ENCODE measurements at regions of chr17 and their contacts with region 1.

Region 1: GRCh38 chr17:17859909-17860765 is 23.4 kb upstream of the SREBF1 start:
- DNase-seq: peak; percentile 73
- ATAC-seq: peak; percentile 94
- H3K4me3 Mint-ChIP-seq: no peak overlapping the region
- H3K27ac Mint-ChIP-seq: no peak overlapping the region
- H3K4me1 Mint-ChIP-seq: peaks cover 30% of the 10 kb centered on the region
- H3K27me3 Mint-ChIP-seq: peaks cover 2% of the 10 kb centered on the region

Region 2: DNA sequence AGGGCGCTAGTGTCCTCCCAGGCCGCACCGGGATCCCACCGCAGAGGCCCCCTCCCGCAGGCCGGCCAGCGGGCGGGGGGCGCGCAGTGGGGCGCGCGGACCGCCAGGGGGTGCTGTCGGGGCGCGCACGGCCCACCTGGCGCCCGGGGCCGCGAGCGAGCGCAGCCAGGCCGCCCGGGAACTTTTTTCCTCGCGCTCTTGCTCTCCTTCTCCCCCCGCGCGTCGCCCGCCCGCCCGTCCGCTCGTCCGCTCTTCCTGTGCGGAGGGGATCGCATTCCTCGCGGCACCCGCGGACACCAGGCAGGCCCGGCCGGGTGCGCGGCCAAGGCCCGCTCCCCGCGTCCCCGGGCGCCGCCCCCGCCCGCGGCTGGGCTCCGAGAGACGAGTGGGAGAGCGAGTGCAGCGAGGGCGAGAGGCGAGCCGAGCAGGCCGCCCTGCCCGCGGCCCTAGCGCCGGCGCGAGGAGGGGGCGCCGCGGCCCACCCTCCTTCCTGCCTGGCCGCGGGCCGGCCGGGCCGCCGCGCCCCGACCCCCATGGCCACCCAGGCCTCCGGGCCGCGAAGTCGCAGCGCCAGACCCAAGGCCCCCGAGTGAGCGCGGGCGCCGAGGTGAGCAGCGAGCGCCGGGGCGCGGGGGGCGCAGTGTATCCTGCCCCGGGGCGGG is 178.8 kb before region 1 on chr17 and contains the start of gene RAI1:
- CTCF ChIA-PET with region 1: interaction called, 17 read pairs
- DNase-seq: peak; percentile 75
- ATAC-seq: peak; percentile 72
- H3K4me3 Mint-ChIP-seq: peak within 1 kb of the TSS; percentile 85
- H3K27ac Mint-ChIP-seq: peak within 1 kb of the TSS; percentile 83
- H3K4me1 Mint-ChIP-seq: peaks cover 37% of the 10 kb centered on the region
- H3K27me3 Mint-ChIP-seq: peaks cover 13% of the 10 kb centered on the region
- total RNA-seq, gene RAI1: 17.4 to 24.4 TPM

Region 3: GRCh38 chr17:17823433-17824118 is 36.6 kb before region 1 on chr17:
- CTCF ChIA-PET with region 1: interaction called, 19 read pairs
- DNase-seq: peak; percentile 91
- ATAC-seq: peak; percentile 92
- H3K4me3 Mint-ChIP-seq: peak overlapping the region; percentile 76
- H3K27ac Mint-ChIP-seq: peak overlapping the region; percentile 92
- H3K4me1 Mint-ChIP-seq: peaks cover 89% of the 10 kb centered on the region
- H3K27me3 Mint-ChIP-seq: no peaks in the 10 kb centered on the region

Region 4: DNA sequence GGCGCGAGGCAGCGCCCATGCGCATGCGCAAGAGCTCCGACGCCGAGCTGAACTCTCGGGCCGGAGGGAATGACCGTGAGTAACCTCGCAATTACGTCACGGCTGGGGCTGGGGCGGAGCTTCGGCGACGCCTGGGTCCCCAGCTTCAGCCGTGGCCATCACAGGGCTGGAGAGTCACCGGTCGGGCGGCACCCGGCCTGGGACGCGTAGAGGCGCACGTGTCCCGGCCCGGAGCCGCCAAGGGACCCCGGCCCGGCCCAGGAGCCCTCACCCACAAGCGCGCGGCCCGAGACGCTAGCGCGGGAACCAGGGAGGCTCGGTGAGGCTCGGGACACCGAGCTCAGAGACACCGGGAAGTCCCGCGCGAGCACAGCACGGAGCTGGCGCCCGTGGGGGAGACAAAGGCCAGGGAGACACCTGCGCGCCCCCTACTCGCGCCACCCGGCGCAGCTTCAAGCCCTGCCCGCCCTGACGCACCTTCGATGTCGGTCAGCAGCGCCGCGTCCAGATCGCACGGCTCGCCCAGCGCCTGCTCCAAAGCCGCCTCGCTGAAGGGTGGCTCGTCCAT is 23.8 kb before region 1 on chr17:
- CTCF ChIA-PET with region 1: interaction called, 19 read pairs
- DNase-seq: peak; percentile 98
- ATAC-seq: peak; percentile 77
- H3K4me3 Mint-ChIP-seq: peak overlapping the region; percentile 85
- H3K27ac Mint-ChIP-seq: peak overlapping the region; percentile 95
- H3K4me1 Mint-ChIP-seq: peaks cover 71% of the 10 kb centered on the region
- H3K27me3 Mint-ChIP-seq: no peaks in the 10 kb centered on the region

Region 5: DNA sequence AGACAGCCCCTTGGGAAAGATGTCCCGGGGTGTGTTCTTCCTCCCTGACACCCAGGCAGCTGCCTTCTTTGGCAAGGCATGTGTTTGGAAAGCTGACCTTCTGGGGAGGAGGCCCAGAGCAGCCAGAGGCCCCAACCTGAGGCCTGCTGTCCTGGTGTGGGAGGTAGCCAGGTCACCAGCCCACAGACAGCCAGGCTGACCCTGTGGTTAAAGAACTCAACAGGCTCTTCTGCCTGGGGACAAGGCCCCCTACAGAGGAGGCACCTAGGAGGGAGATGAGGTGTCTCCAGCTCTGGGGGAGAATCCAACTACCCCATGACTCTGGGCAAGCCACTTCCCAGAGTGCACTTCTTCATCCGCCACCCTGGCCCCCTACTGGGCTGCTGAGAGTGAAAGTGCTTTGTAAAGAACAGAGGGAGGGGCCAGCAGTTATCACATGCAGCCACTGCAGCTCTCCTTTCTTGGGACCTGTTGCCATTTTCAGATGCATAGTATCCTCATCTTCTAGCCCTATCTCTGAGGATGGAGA is 10.2 kb before region 1 on chr17:
- CTCF ChIA-PET with region 1: interaction called, 14 read pairs
- DNase-seq: peak; percentile 92
- ATAC-seq: peak; percentile 55
- H3K4me3 Mint-ChIP-seq: no peak overlapping the region
- H3K27ac Mint-ChIP-seq: peak overlapping the region; percentile 94
- H3K4me1 Mint-ChIP-seq: peaks cover 75% of the 10 kb centered on the region
- H3K27me3 Mint-ChIP-seq: no peaks in the 10 kb centered on the region